Panc1 (cell line): ENCODE measurements at regions of chr1 and their contacts with region 1.

Region 1: DNA sequence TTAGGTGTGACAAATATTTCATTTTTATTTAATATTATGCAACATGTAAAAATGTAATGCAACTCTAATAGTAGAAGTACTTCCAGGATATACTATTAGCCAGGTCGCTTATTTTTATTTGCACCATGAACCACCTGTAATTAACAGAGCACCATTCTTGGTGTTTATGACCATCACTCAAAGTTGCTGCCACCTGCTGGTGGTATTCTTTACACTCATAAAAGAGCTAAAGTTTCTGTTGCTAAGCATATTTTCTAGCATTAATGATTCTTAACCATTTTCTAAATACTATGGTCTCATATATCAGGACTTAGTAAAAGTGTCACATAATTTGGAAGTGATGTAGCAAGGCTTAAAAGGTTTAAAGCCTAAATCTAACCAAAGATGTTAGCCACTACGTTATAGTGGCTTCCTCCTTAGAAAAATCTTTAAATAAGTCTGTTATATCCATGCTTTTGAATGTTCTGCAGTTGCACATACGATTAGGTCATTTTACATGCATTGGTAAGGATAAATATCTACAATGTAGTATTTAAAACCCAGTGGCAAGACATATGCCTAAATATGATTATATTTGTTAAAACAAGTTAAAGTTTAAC is 244.5 kb downstream of the NEGR1 start:
- DNase-seq: no peak
- ATAC-seq: no peak
- H3K4me3 ChIP-seq: no peak overlapping the region
- H3K27ac ChIP-seq: no peak overlapping the region
- H3K4me1 ChIP-seq: no peaks in the 10 kb centered on the region
- H3K27me3 ChIP-seq: no peaks in the 10 kb centered on the region
- CTCF ChIP-seq: peak; percentile 44; the same call in 1 of the 2 replicates

Region 2: DNA sequence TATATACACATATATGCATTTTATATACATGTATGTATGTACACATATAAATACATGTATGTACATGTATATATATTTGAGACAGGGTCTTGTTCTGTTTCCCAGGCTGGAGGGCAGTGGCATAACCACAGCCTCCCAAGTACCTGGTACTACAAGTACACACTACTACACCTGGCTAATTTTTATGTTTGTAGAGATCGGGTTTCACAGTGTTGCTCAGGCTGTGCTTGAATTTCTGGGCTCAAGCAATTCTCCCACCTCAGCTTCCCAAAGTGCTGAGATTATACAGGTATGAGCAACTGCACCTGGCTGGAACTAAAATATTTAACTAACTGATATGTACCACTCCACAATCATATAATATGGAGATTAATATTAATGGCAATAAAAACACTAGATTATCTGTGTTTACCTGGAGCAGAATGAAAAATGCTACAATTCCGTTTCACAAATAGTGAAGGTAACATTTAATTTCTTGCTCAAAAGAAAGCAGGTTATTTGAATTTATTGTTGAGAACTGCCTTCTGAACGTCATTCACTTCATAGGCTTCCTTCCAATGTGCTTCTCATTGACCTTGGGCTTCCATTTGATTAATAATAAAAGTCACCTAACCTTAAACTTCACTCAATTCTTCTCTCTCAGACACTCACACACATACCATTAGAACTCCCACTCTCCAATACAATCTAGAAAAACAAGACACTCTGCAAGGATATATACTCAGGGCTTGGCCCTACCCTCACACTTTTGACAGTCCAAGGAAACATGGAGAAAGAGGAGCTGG is 1047.2 kb before region 1 on chr1:
- CTCF ChIA-PET with region 1: interaction called, 12 read pairs
- POLR2A ChIA-PET with region 1: no interaction called
- in situ Hi-C with region 1: no loop called
- intact Hi-C with region 1: no loop called
- DNase-seq: no peak
- ATAC-seq: no peak
- H3K4me3 ChIP-seq: no peak overlapping the region
- H3K27ac ChIP-seq: no peak overlapping the region
- H3K4me1 ChIP-seq: no peaks in the 10 kb centered on the region
- H3K27me3 ChIP-seq: no peaks in the 10 kb centered on the region
- CTCF ChIP-seq: no peak

Region 3: GRCh38 chr1:71587961-71588360 is 449.9 kb before region 1 on chr1:
- CTCF ChIA-PET with region 1: no interaction called
- POLR2A ChIA-PET with region 1: no interaction called
- in situ Hi-C with region 1: no loop called
- intact Hi-C with region 1: loop called (anchors 5 kb)
- DNase-seq: no peak
- ATAC-seq: no peak
- H3K4me3 ChIP-seq: no peak overlapping the region
- H3K27ac ChIP-seq: no peak overlapping the region
- H3K4me1 ChIP-seq: no peaks in the 10 kb centered on the region
- H3K27me3 ChIP-seq: no peaks in the 10 kb centered on the region
- CTCF ChIP-seq: peak; percentile 12; the same call in 1 of the 2 replicates

Region 4: GRCh38 chr1:72100771-72101170 is 62.9 kb after region 1 on chr1:
- CTCF ChIA-PET with region 1: no interaction called
- POLR2A ChIA-PET with region 1: no interaction called
- in situ Hi-C with region 1: no loop called
- intact Hi-C with region 1: no loop called
- DNase-seq: no peak
- ATAC-seq: no peak
- H3K4me3 ChIP-seq: no peak overlapping the region
- H3K27ac ChIP-seq: no peak overlapping the region
- H3K4me1 ChIP-seq: no peaks in the 10 kb centered on the region
- H3K27me3 ChIP-seq: no peaks in the 10 kb centered on the region
- CTCF ChIP-seq: no peak

Region 5: DNA sequence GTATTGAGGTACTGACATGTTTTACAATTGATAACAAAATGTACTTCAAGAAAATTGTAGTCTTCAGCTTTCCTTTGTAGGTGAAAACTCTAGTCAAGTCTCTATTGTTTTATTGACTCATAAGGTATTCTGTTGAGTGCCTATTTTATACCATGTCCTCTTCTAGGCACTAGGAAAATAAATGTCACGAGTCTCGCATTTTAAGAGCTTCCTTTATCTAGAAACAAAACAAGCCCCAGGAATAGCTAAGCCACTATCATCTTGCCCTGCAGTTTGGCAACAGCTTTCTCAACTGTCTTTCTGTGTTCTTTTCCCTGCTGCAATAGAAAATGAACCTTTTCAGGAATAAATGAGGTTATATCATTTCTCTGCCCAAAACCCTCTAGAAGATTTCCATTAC is 533.0 kb after region 1 on chr1:
- CTCF ChIA-PET with region 1: no interaction called
- POLR2A ChIA-PET with region 1: no interaction called
- in situ Hi-C with region 1: no loop called
- intact Hi-C with region 1: no loop called
- DNase-seq: no peak
- ATAC-seq: no peak
- H3K4me3 ChIP-seq: no peak overlapping the region
- H3K27ac ChIP-seq: no peak overlapping the region
- H3K4me1 ChIP-seq: no peaks in the 10 kb centered on the region
- H3K27me3 ChIP-seq: no peaks in the 10 kb centered on the region
- CTCF ChIP-seq: no peak